CD14-positive monocyte (primary cell): ENCODE measurements at regions of chr3 and their contacts with region 1.

Region 1: DNA sequence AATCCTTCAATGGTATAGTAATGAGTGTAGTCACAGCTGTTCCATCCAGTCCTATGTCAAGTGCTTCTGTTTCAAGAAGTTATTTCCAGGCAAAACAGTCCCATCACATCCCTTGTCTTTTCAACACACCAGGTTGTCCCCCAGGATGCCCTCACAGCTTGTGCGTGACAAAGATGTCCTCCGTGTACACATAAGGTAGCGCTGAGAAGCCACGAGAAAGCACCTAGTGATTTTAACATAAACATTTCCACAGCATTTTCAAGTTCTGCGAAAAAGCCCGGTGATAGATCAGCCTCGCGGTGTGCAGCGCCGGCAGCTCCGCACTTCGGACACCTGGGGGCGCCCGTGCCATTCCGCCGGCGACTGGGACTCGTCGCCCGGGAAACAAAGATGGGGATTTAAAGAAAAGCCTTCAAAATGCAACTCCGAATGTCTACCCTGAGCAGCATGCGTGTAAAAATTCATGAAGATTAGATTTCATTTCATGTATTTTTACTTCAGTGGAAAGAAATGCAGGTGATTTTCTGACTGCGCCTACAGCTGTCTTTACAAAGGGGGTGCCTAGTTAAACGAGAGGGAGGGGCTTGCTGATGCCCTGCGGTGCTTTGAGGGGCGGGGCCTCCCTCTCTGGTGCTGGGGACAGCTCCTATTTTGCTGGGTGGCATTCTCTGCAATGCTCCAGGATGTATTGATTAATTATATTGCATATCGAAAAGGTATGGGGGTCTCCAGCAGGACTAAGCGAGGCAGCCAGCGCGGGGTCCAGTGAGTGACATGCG is 49.9 kb downstream of the KY start:
- DNase-seq: peak; percentile 54 to 63 (median 56)
- H3K4me3 ChIP-seq: no peak overlapping the region
- H3K4me3 Mint-ChIP-seq: peak overlapping the region in 1 of 2 donors; percentile 15
- H3K27ac ChIP-seq: no peak overlapping the region
- H3K27ac Mint-ChIP-seq: no peak overlapping the region
- H3K4me1 ChIP-seq: peaks cover 40 to 48% of the 10 kb centered on the region in 2 donors
- H3K4me1 Mint-ChIP-seq: peaks cover 58% of the 10 kb centered on the region
- H3K27me3 ChIP-seq: no peaks in the 10 kb centered on the region
- H3K27me3 Mint-ChIP-seq: peaks cover 0 to 1% (median under 1%) of the 10 kb centered on the region in 3 donors
- CTCF ChIP-seq: peak; percentile 96

Region 2: GRCh38 chr3:134640872-134641470 is 40.1 kb after region 1 on chr3:
- intact Hi-C with region 1: loop called in 1 of 2 experiments (anchors 5 kb)
- DNase-seq: peak; percentile 14 to 33 (median 20)
- H3K4me3 ChIP-seq: no peak overlapping the region
- H3K4me3 Mint-ChIP-seq: no peak overlapping the region
- H3K27ac ChIP-seq: no peak overlapping the region
- H3K27ac Mint-ChIP-seq: peak overlapping the region in 1 of 7 donors; percentile 15
- H3K4me1 ChIP-seq: no peaks in the 10 kb centered on the region
- H3K4me1 Mint-ChIP-seq: peaks cover 2% of the 10 kb centered on the region
- H3K27me3 ChIP-seq: no peaks in the 10 kb centered on the region
- H3K27me3 Mint-ChIP-seq: peaks cover 0 to 2% (median 1%) of the 10 kb centered on the region in 3 donors
- CTCF ChIP-seq: peak; percentile 50

Region 3: GRCh38 chr3:135895106-135895733 is 1294.3 kb after region 1 on chr3:
- intact Hi-C with region 1: loop called in 1 of 2 experiments (anchors 10 kb)
- DNase-seq: peak; percentile 2 to 29 (median 20)
- H3K4me3 ChIP-seq: no peak overlapping the region
- H3K4me3 Mint-ChIP-seq: no peak overlapping the region
- H3K27ac ChIP-seq: no peak overlapping the region
- H3K27ac Mint-ChIP-seq: no peak overlapping the region
- H3K4me1 ChIP-seq: no peaks in the 10 kb centered on the region
- H3K4me1 Mint-ChIP-seq: no peaks in the 10 kb centered on the region
- H3K27me3 ChIP-seq: peaks cover 0 to 3% of the 10 kb centered on the region in 2 donors
- H3K27me3 Mint-ChIP-seq: peaks cover 2 to 7% (median 3%) of the 10 kb centered on the region in 3 donors
- CTCF ChIP-seq: peak; percentile 72